ENCODE measurements at regions of chr16 and their contacts with region 1.

Region 1: GRCh38 chr16:10876799-10877341 is at the start of gene CIITA:
- DNase-seq: peak; percentile 81
- ATAC-seq: peak; percentile 89
- H3K4me3 ChIP-seq: no peak within 1 kb of the TSS
- H3K27ac ChIP-seq: no peak within 1 kb of the TSS
- H3K4me1 ChIP-seq: peaks cover 5 to 11% of the 10 kb centered on the region in 2 experiments; a peak in 3 of 4 replicates
- H3K27me3 ChIP-seq: peaks cover 15% of the 10 kb centered on the region; the same call in 1 of the 2 replicates
- CTCF ChIP-seq: no peak
- POLR2A ChIP-seq: no peak
- RAD21 ChIP-seq: no peak
- total RNA-seq, gene CIITA: 0.25 TPM

Region 2: DNA sequence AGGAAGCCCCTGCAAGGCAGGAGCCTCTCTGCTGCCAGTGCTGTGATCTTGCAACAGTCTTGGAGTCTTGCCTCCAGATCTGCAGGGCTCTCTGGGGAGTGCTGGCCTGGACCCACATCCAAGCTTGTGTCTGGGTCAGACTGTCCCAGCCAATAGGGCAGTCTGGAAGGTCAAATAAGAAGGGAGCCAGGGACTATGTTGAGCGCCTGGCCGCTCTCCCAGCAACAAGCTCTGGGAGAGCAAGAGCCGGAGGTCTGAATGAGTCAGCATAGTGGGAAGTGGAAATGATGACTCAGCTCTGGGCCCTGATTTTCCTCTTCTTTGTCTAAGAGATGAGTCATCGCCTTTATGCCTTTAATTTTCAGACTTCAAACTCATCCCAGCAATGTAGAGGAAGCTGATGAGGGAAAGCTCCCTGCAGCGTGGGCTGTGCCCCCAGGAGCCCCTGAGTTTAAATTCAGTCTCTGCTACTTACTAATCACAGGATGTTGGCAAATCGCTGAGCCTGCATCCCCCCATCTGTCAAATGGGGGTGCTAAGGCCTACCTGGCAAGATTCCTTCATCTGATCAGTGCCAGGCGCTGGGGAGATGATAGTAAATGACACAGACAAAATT is 1829.1 kb before region 1 on chr16:
- CTCF ChIA-PET with region 1: no interaction called
- POLR2A ChIA-PET with region 1: no interaction called
- RAD21 ChIA-PET with region 1: no interaction called
- intact Hi-C with region 1: no loop called
- DNase-seq: peak; percentile 98
- ATAC-seq: peak; percentile 92
- H3K4me3 ChIP-seq: peak overlapping the region in 1 of 2 experiments; percentile 43; a peak in 2 of 4 replicates
- H3K27ac ChIP-seq: peak overlapping the region; percentile 83
- H3K4me1 ChIP-seq: peaks cover 41 to 48% of the 10 kb centered on the region in 2 experiments
- H3K27me3 ChIP-seq: no peaks in the 10 kb centered on the region
- CTCF ChIP-seq: no peak
- POLR2A ChIP-seq: no peak
- RAD21 ChIP-seq: peak; percentile 37; the same call in 1 of the 2 replicates

Region 3: DNA sequence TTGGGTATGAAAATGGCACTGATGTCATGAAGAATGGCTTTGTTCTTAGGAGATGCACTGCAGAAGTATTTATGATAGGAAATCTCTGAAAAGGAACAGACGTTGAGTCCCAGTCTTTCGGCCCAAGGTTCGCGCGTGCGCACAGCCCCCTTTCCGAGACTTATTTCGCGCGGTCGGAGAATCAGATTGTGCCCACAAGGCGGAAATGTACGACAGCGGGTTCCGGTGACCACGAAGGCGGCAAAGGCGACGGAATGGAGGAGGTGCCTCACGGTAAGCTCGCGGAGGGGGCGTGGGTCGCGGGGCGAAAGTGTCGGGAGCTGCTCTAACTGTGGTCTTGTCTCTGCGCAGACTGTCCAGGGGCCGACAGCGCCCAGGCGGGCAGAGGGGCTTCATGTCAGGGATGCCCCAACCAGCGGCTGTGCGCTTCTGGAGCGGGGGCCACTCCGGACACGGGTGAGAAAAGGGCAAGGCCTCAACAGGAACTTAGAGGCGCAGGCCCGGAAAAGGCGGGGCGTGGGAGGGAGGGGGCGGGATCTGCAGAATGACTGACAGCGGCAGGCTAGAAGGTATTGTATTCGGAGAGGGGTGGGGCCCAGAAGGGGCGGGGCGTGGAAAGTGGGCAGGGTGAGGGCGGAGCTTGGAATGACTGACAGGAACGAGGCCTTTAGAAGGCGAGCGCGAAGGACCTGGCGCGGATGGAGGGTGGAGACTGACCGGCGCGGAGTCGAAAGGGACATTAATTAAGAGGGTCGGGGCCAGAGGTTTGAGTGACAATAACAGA is 133.1 kb before region 1 on chr16 and contains the start of gene NUBP1:
- CTCF ChIA-PET with region 1: no interaction called
- POLR2A ChIA-PET with region 1: no interaction called
- RAD21 ChIA-PET with region 1: no interaction called
- intact Hi-C with region 1: loop called (anchors 5 kb)
- DNase-seq: peak; percentile 97
- ATAC-seq: peak; percentile 92
- H3K4me3 ChIP-seq: peak within 1 kb of the TSS; percentile 58 to 68
- H3K27ac ChIP-seq: peak within 1 kb of the TSS; percentile 85
- H3K4me1 ChIP-seq: peaks cover 16 to 37% of the 10 kb centered on the region in 2 experiments
- H3K27me3 ChIP-seq: no peaks in the 10 kb centered on the region
- CTCF ChIP-seq: no peak
- POLR2A ChIP-seq: peak; percentile 79
- RAD21 ChIP-seq: no peak
- total RNA-seq, gene NUBP1: 31.5 TPM

Region 4: GRCh38 chr16:10812312-10813098 is 64.4 kb before region 1 on chr16:
- CTCF ChIA-PET with region 1: no interaction called
- POLR2A ChIA-PET with region 1: no interaction called
- RAD21 ChIA-PET with region 1: no interaction called
- intact Hi-C with region 1: loop called (anchors 10 kb)
- DNase-seq: no peak
- ATAC-seq: no peak
- H3K4me3 ChIP-seq: no peak overlapping the region
- H3K27ac ChIP-seq: no peak overlapping the region
- H3K4me1 ChIP-seq: no peaks in the 10 kb centered on the region
- H3K27me3 ChIP-seq: no peaks in the 10 kb centered on the region
- CTCF ChIP-seq: no peak
- POLR2A ChIP-seq: no peak
- RAD21 ChIP-seq: no peak

Region 5: DNA sequence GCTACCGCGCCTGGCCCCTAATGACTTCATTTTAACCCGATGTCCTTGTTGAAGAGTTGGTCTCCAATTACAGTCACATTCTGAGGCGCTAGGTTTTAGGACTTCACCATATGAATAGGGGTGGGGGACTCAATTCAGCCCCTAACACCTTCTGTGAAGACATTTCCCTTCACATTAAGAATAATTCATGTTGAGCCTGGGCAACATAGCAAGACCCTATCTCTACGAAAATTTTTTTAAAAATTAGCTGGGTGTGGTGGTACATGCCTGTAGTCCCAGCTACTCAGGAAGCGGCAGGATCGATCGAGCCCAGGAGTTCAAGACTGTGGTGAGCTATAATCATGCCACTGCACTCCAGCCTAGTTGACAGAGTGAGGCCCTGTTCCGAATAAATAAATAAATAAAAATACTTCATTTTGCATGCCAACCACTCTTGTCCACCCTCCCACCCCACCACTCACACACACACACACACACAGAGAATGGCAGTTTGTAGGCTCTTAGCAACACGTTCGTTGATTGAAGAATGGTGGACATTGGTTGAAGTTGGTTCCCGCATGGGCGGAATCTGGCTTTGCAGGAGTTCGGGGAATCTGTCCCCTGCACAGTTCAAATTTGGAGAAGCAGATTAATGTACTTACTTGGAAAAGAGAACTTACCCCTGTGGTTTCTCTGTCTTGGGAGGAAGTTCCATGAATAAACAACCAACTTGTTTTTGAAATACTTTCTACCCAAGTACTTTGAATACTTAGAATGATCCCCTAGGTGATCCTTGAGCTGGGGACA is 30.5 kb before region 1 on chr16:
- CTCF ChIA-PET with region 1: no interaction called
- POLR2A ChIA-PET with region 1: no interaction called
- RAD21 ChIA-PET with region 1: no interaction called
- intact Hi-C with region 1: no loop called
- DNase-seq: no peak
- ATAC-seq: no peak
- H3K4me3 ChIP-seq: no peak overlapping the region
- H3K27ac ChIP-seq: no peak overlapping the region
- H3K4me1 ChIP-seq: no peaks in the 10 kb centered on the region
- H3K27me3 ChIP-seq: peaks cover 6% of the 10 kb centered on the region
- CTCF ChIP-seq: no peak
- POLR2A ChIP-seq: no peak
- RAD21 ChIP-seq: no peak

Region 6: GRCh38 chr16:10862432-10862831 is 14.4 kb before region 1 on chr16:
- CTCF ChIA-PET with region 1: no interaction called
- POLR2A ChIA-PET with region 1: no interaction called
- RAD21 ChIA-PET with region 1: no interaction called
- intact Hi-C with region 1: no loop called
- DNase-seq: peak; percentile 37
- ATAC-seq: peak; percentile 42; the same call in 1 of the 2 replicates
- H3K4me3 ChIP-seq: no peak overlapping the region
- H3K27ac ChIP-seq: no peak overlapping the region
- H3K4me1 ChIP-seq: peaks cover 0 to 6% of the 10 kb centered on the region in 2 experiments; a peak in 2 of 4 replicates
- H3K27me3 ChIP-seq: peaks cover 16% of the 10 kb centered on the region
- CTCF ChIP-seq: no peak
- POLR2A ChIP-seq: no peak
- RAD21 ChIP-seq: no peak

Region 7: GRCh38 chr16:10897134-10897533 is 20.3 kb after region 1 on chr16:
- CTCF ChIA-PET with region 1: no interaction called
- POLR2A ChIA-PET with region 1: no interaction called
- RAD21 ChIA-PET with region 1: no interaction called
- intact Hi-C with region 1: no loop called
- DNase-seq: no peak
- ATAC-seq: no peak
- H3K4me3 ChIP-seq: no peak overlapping the region
- H3K27ac ChIP-seq: no peak overlapping the region
- H3K4me1 ChIP-seq: no peaks in the 10 kb centered on the region
- H3K27me3 ChIP-seq: peaks cover 16% of the 10 kb centered on the region
- CTCF ChIP-seq: no peak
- POLR2A ChIP-seq: no peak
- RAD21 ChIP-seq: no peak

Measured in HCT116 (cell line).